GM10248 (cell line): ENCODE measurements at regions of chr7 and their contacts with region 1.

Region 1: GRCh38 chr7:135160098-135160857 is 10.2 kb downstream of the CYREN start:
- DNase-seq: no peak
- CTCF ChIP-seq: no peak

Region 2: DNA sequence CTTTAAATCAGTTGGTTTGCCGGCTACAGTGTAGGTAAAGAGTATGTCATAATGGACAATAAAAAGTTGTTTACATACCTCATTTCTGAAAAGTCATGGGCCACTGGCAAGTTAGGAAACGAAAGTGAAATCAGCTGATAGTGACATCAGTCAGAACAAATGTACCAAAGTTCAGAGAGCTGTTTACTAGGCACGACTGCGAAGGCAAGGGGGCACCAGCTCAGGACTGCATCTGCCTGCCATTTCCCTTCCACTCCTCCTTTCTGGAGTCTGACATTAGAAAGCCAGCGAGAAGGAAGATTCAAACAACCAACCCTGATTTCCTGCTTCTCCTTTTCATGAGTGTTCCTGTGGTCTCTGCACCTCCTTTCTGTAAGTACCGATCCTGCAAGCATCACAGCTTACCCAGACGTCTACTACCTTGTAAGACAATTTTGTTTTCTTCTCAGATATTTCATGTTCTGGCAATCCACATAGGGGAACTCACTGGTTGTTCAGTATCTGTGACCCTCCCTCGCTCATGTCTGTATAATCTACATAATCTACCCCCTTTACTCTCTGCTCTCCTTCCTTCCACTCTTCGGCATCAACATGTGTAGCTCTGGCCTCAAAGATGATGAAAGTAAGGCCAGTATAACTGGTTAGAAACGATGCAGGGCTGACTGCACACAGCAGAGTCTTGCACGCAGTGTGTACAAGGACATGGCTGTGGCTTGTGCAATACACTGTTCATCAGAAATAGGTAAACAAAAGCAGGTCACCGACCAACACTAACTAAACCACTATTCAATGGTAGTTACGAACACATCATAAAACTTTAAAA is 12.2 kb before region 1 on chr7 and contains the start of gene TMEM140:
- CTCF ChIA-PET with region 1: interaction called, 15 read pairs
- POLR2A ChIA-PET with region 1: interaction called, 4 read pairs
- DNase-seq: peak; percentile 54
- CTCF ChIP-seq: no peak

Region 3: DNA sequence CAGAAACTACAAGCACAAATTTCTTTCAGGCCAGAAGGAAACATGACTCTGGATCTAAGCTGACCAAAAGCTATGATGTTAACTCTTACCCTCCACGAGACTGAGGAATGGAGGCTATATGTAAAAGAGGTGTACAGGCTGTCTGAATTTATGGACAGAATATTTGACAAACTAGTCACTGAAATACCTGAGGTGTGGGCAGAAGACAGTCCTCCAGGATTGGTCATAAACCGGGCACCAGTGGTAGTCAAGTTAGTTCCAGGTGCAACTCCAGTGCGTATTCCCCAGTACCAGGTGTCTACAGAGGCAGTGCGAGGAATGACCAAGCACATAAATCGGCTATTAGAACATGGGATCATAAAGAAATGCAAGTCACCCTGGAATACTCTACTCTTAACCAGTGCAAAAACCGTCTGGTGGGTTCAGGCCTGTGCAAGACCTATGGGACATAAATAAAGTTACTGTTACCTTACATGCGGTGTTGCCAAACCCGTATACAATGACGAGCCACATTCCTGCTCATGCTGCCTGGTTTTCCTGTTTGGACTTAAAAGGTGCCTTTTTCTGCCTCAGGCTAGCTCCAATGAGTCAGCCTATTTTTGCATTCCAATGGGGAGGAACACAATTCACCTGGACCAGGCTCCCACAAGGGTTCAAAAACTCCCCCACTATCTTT is 16.9 kb after region 1 on chr7:
- CTCF ChIA-PET with region 1: interaction called, 11 read pairs
- POLR2A ChIA-PET with region 1: no interaction called
- DNase-seq: no peak
- CTCF ChIP-seq: no peak